ENCODE measurements at regions of chr4 and their contacts with region 1.

Region 1: GRCh38 chr4:184825896-184826690 is at the start of gene ACSL1:
- DNase-seq: peak; percentile 93
- H3K4me3 Mint-ChIP-seq: peak within 1 kb of the TSS; percentile 94
- H3K27ac Mint-ChIP-seq: peak within 1 kb of the TSS; percentile 97
- H3K4me1 Mint-ChIP-seq: peaks cover 33% of the 10 kb centered on the region
- H3K27me3 Mint-ChIP-seq: peaks cover 11% of the 10 kb centered on the region
- total RNA-seq, gene ACSL1: 38.3 and 41.7 TPM in 2 replicates

Region 2: GRCh38 chr4:183504064-183504929 is 1321.8 kb before region 1 on chr4:
- intact Hi-C with region 1: loop called (anchors 10 kb)
- DNase-seq: peak; percentile 100
- H3K4me3 Mint-ChIP-seq: peak overlapping the region; percentile 90
- H3K27ac Mint-ChIP-seq: peak overlapping the region; percentile 95
- H3K4me1 Mint-ChIP-seq: peaks cover 25% of the 10 kb centered on the region
- H3K27me3 Mint-ChIP-seq: no peaks in the 10 kb centered on the region

Region 3: GRCh38 chr4:184649026-184649970 is 176.8 kb before region 1 on chr4 and contains the starts of genes CASP3 and PRIMPOL:
- intact Hi-C with region 1: loop called (anchors 2 kb)
- DNase-seq: peak; percentile 99
- H3K4me3 Mint-ChIP-seq: peak within 1 kb of the TSS; percentile 99
- H3K27ac Mint-ChIP-seq: peak within 1 kb of the TSS; percentile 92
- H3K4me1 Mint-ChIP-seq: peaks cover 51% of the 10 kb centered on the region
- H3K27me3 Mint-ChIP-seq: no peaks in the 10 kb centered on the region
- total RNA-seq, gene CASP3: 84.8 and 89.8 TPM in 2 replicates
- total RNA-seq, gene PRIMPOL: 14.7 and 17.6 TPM in 2 replicates

Region 4: GRCh38 chr4:184762100-184762499 is 64.0 kb before region 1 on chr4:
- intact Hi-C with region 1: loop called (anchors 1 kb)
- DNase-seq: peak; percentile 90
- H3K4me3 Mint-ChIP-seq: peak overlapping the region; percentile 71
- H3K27ac Mint-ChIP-seq: peak overlapping the region; percentile 93
- H3K4me1 Mint-ChIP-seq: peaks cover 19% of the 10 kb centered on the region
- H3K27me3 Mint-ChIP-seq: no peaks in the 10 kb centered on the region

Region 5: GRCh38 chr4:184907216-184907615 is 81.1 kb after region 1 on chr4:
- intact Hi-C with region 1: loop called (anchors 5 kb)
- DNase-seq: peak; percentile 65
- H3K4me3 Mint-ChIP-seq: no peak overlapping the region
- H3K27ac Mint-ChIP-seq: no peak overlapping the region
- H3K4me1 Mint-ChIP-seq: peaks cover 10% of the 10 kb centered on the region
- H3K27me3 Mint-ChIP-seq: peaks cover 8% of the 10 kb centered on the region

Region 6: GRCh38 chr4:185395956-185396723 is 570.0 kb after region 1 on chr4:
- intact Hi-C with region 1: loop called (anchors 5 kb)
- DNase-seq: peak; percentile 100
- H3K4me3 Mint-ChIP-seq: peak overlapping the region; percentile 87
- H3K27ac Mint-ChIP-seq: peak overlapping the region; percentile 96
- H3K4me1 Mint-ChIP-seq: peaks cover 48% of the 10 kb centered on the region
- H3K27me3 Mint-ChIP-seq: no peaks in the 10 kb centered on the region